Panc1 (cell line): ENCODE measurements at regions of chr2 and their contacts with region 1.

Region 1: GRCh38 chr2:70871398-70872211 is 36.0 kb upstream of the CD207 start:
- DNase-seq: peak; percentile 20
- ATAC-seq: peak; percentile 99
- H3K4me3 ChIP-seq: no peak overlapping the region
- H3K27ac ChIP-seq: no peak overlapping the region
- H3K4me1 ChIP-seq: no peaks in the 10 kb centered on the region
- H3K27me3 ChIP-seq: peaks cover 3% of the 10 kb centered on the region
- CTCF ChIP-seq: peak; percentile 95

Region 2: DNA sequence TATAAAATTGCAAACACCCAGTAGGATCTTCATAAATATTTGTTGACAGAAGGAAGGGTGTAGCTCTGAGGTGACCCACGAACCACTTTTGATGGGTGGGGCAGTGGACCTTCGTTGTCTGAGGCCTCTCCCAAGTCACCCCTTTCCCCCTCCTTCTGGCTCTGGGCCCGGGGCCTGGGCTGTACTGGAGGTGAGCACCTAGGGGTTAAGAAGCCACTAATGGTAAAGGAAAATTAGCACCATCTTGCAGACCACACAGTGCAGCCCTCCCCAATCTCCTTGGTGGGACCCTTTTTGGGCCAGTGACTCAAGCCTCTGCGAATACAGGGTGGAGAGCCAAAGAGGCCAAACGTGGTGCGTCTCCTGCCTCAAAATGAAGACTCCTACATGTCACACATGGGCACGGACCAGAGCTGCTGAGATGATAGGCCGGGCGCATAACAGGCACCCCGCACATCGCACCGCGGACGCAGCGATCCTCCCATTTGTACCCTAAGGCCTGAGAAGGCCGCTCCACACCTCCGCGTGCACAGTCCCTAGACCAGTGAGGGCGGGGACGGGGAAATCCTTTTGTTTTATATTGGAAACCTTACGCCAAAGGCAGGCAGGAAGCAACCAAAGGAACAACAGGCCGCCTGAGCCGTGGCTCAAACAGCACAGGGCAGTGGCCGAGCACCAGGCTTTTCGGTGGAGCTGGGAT is 32.2 kb after region 1 on chr2:
- CTCF ChIA-PET with region 1: interaction called, 10 read pairs
- POLR2A ChIA-PET with region 1: no interaction called
- in situ Hi-C with region 1: no loop called
- intact Hi-C with region 1: no loop called
- DNase-seq: no peak
- ATAC-seq: no peak
- H3K4me3 ChIP-seq: no peak overlapping the region
- H3K27ac ChIP-seq: no peak overlapping the region
- H3K4me1 ChIP-seq: no peaks in the 10 kb centered on the region
- H3K27me3 ChIP-seq: no peaks in the 10 kb centered on the region; the same call in 1 of the 2 replicates
- CTCF ChIP-seq: no peak

Region 3: DNA sequence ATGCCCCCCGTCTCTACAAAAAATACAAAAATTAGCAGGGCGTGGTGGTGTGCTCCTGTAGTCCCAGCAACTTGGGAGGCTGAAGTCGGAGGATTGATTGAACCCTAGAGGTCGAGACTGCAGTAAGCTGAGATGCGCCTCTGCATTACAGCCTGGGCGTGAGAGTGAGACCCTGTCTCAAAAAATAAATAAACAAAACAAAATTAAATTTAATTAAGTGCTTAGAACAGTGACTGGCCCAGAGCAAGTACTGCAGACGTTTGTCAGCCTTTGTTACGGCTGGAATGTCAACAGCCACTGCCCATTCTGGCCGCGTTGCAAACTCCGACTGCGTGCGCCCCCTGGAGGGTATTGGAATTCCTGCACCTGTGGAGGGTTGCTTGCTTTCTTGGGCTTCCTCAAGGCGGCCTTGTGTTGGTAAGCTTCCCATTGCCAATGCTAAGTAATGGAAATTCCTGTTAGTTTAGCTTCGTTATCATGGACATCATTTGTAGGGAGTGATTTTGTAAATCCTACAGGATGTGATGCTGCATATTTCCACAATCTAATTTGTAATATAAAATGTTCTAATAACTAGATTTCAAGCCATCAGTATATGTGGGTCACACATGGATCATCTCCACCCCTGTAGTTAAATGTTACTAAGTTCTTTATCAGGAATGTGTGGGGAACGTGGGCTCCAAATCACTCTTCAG is 48.2 kb after region 1 on chr2:
- CTCF ChIA-PET with region 1: interaction called, 6 read pairs
- POLR2A ChIA-PET with region 1: no interaction called
- in situ Hi-C with region 1: no loop called
- intact Hi-C with region 1: loop called (anchors 2 kb)
- DNase-seq: peak; percentile 57
- ATAC-seq: peak; percentile 89
- H3K4me3 ChIP-seq: no peak overlapping the region
- H3K27ac ChIP-seq: no peak overlapping the region
- H3K4me1 ChIP-seq: no peaks in the 10 kb centered on the region
- H3K27me3 ChIP-seq: no peaks in the 10 kb centered on the region
- CTCF ChIP-seq: peak; percentile 96

Region 4: GRCh38 chr2:70948337-70949003 is 76.9 kb after region 1 on chr2:
- CTCF ChIA-PET with region 1: interaction called, 9 read pairs
- POLR2A ChIA-PET with region 1: no interaction called
- in situ Hi-C with region 1: no loop called
- intact Hi-C with region 1: loop called (anchors 2 kb)
- DNase-seq: peak; percentile 63
- ATAC-seq: peak; percentile 96
- H3K4me3 ChIP-seq: peak overlapping the region; percentile 16 to 43
- H3K27ac ChIP-seq: no peak overlapping the region
- H3K4me1 ChIP-seq: no peaks in the 10 kb centered on the region; the same call in 1 of the 2 replicates
- H3K27me3 ChIP-seq: peaks cover 5% of the 10 kb centered on the region
- CTCF ChIP-seq: peak; percentile 97